Left cardiac atrium (tissue), 4 donors: ENCODE measurements at regions of chr22 and their contacts with region 1.

Region 1: DNA sequence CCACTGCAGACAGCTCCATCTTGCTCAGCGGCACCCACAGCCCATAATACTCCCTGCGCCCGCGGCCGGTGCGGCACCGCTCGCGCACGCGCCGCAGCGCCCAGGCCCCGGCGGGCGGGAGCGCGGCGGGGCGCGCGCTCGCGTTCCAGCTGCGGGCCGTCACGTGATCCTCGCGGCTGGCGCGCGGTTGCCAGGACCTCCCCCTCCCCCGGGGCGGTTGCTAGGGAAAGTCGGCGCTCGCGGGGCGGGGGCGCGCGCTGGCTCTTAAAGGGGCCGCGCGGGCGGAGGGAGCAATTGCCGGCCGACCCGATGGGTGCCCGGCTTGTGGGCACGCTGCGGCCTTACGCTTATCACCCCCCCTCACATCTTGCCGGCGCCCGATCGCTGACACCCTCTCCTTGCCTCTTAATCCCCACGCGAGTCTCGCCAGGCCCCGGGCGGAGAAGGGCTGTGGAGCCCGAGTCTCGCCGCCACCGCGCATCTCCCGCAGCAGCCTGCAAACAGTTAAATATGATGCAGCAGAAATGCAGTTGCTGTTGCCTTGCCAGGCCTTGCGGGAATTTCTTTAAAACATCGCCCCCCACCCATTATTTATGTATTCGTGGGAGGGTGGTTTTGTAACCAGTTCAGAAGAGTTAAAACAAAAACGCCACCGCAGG is at the start of gene CBX6:
- DNase-seq: peak; percentile 96
- ATAC-seq: peak; percentile 84 to 88
- total RNA-seq, gene CBX6: 46.0 to 54.3 TPM

Region 2: GRCh38 chr22:38681784-38682335 is 190.4 kb before region 1 on chr22 and contains the start of gene TOMM22:
- intact Hi-C with region 1: no loop called
- DNase-seq: peak; percentile 92
- ATAC-seq: peak; percentile 99 to 100
- total RNA-seq, gene TOMM22: 56.0 to 67.2 TPM

Region 3: GRCh38 chr22:38755911-38756532 is 116.3 kb before region 1 on chr22 and contains the start of gene SUN2:
- intact Hi-C with region 1: loop called in 1 of 2 experiments (anchors 5 kb)
- DNase-seq: peak; percentile 97
- ATAC-seq: peak; percentile 85 to 90
- total RNA-seq, gene SUN2: 109 to 133 TPM

Region 4: DNA sequence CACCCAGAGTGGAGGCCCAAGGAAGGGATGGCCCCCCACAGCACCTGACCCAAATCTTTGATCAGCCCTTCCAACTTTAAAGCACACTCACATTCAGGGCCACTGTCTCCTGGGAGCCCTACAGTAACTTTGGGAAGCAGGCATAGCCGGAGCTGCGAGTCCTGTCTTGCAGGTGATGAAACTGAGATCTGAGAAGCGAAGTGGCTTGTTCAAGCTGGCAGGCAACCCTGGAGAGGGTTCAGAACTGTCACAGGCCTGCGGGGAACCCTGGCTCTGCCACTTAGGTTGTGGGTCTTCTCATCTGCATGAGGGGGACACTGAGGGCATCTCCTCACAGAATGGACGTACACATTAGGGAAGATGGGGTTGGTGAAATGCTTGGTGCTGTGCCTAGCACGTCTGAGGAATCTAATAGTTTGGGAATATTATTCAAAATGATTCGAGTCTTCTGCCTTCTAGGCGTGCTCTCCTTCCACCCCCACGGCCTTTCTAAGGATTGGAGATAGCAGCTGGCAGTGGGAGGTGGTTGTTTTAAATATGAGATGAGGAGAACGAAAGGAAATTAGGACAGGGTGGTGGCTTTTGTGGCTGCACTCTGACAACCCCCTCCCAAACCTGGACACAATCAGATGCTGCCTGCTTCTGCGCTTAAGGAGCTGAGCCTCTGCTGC is 97.7 kb before region 1 on chr22:
- intact Hi-C with region 1: loop called in 1 of 2 experiments (anchors 10 kb)
- DNase-seq: no peak
- ATAC-seq: no peak

Region 5: GRCh38 chr22:38927033-38927781 is 54.9 kb after region 1 on chr22:
- intact Hi-C with region 1: loop called (anchors 5 to 10 kb)
- DNase-seq: peak; percentile 79
- ATAC-seq: peak; percentile 73

Region 6: GRCh38 chr22:39003165-39003638 is 130.9 kb after region 1 on chr22:
- intact Hi-C with region 1: loop called (anchors 1 to 2 kb)
- DNase-seq: peak; percentile 81
- ATAC-seq: peak; percentile 92 to 96

Region 7: GRCh38 chr22:39123751-39124601 is 251.7 kb after region 1 on chr22:
- intact Hi-C with region 1: loop called (anchors 5 to 10 kb)
- DNase-seq: no peak
- ATAC-seq: peak in 1 of 2 donors; percentile 42